Activated CD4-positive, alpha-beta T cell treated with anti-CD3 and anti-CD28 coated beads for 36 hours (primary cell): ENCODE measurements at regions of chr1 and their contacts with region 1.

Region 1: DNA sequence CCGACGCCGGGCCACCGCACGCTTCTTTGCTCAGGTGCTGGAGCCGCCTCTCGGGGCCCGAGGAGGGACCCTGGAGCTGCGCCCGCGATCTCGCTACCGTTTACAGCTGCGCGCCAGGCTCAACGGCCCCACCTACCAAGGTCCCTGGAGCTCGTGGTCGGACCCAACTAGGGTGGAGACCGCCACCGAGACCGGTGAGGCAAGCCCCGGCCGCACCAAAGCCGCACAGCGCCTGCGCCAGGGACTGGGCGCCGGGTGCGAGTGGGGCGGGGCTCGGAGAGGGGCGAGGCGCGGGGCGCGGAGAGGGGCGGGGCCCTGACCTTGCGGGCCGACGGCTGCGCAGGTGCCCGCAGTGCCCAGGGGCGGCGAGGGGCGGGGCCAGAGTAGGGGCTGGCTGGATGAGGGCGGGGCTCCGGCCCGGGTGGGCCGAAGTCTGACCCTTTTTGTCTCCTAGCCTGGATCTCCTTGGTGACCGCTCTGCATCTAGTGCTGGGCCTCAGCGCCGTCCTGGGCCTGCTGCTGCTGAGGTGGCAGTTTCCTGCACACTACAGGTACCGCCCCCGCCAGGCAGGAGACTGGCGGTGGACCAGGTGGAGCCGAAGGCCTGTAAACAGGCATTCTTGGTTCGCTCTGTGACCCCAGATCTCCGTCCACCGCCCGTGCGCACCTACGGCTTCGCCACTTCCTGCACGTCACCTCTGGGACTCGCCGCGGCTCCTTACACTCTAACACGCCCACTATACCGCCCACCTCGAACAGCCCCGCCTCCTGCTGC is 9.8 kb upstream of the CDC20 start:
- DNase-seq: peak; percentile 89
- ATAC-seq: peak; percentile 89
- H3K4me3 Mint-ChIP-seq: peak overlapping the region; percentile 71
- H3K27ac Mint-ChIP-seq: peak overlapping the region; percentile 72
- H3K4me1 Mint-ChIP-seq: peaks cover 19% of the 10 kb centered on the region
- H3K27me3 Mint-ChIP-seq: no peaks in the 10 kb centered on the region

Region 2: DNA sequence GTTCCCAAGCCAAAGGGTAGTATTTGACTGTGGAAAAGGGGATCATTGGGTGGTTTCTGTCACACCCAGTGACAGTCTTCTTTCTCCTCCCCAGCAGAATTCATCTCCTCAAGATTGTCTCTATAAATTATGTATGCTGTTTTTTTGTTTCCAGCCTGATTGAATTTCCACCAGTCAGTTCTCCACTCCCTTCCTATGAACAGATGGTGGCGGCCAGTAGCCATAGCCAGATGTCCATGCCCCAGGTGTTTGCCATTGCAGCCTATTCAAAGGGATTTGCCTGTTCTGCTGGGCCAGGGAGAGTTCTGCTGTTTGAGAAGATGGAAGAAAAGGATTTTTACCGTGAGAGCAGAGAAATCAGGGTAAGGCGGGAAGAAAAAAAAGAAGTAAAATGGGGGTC is 164.0 kb before region 1 on chr1:
- CTCF ChIA-PET with region 1: no interaction called
- POLR2A ChIA-PET with region 1: no interaction called
- intact Hi-C with region 1: no loop called
- DNase-seq: no peak
- ATAC-seq: no peak
- H3K4me3 Mint-ChIP-seq: no peak overlapping the region
- H3K27ac Mint-ChIP-seq: no peak overlapping the region
- H3K4me1 Mint-ChIP-seq: no peaks in the 10 kb centered on the region
- H3K27me3 Mint-ChIP-seq: peaks cover 6% of the 10 kb centered on the region

Region 3: DNA sequence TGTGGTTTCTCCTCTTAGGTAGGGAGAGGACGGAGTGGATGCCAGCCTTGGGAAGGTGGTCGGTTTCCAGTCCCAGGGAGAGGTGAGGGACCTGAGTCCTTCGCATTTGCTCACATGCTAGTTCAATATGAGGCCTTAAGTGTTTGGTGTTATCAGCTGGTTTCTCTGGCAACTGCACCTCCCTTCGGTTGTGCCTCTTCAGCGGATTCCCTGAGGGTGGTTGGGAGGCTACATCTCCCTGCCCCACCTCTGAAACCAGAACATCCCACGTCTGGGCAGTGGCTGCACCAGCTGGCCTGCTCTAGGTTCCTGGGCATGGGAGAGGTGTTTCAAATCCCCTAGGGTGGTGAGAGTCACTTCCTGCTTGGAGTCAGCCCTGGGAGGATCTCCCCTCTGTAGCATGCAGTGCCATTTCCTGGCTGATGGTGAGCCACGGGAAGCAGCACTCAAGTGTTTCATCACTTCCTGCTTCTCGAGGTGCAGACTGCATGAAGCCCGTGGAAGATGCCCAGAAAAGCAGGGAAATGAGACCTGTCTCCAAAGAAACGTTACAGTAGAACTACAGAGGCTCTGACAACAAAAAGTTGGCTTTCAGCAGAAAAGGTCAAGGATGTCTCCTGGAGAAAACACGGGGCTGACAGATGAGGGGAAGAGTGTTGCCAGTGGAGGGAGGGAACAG is 74.7 kb before region 1 on chr1:
- CTCF ChIA-PET with region 1: no interaction called
- POLR2A ChIA-PET with region 1: no interaction called
- intact Hi-C with region 1: loop called in 1 of 2 experiments (anchors 1 kb)
- DNase-seq: peak; percentile 69
- ATAC-seq: peak; percentile 91
- H3K4me3 Mint-ChIP-seq: peak overlapping the region; percentile 15
- H3K27ac Mint-ChIP-seq: peak overlapping the region; percentile 94
- H3K4me1 Mint-ChIP-seq: peaks cover 21% of the 10 kb centered on the region
- H3K27me3 Mint-ChIP-seq: peaks cover 4% of the 10 kb centered on the region

Region 4: DNA sequence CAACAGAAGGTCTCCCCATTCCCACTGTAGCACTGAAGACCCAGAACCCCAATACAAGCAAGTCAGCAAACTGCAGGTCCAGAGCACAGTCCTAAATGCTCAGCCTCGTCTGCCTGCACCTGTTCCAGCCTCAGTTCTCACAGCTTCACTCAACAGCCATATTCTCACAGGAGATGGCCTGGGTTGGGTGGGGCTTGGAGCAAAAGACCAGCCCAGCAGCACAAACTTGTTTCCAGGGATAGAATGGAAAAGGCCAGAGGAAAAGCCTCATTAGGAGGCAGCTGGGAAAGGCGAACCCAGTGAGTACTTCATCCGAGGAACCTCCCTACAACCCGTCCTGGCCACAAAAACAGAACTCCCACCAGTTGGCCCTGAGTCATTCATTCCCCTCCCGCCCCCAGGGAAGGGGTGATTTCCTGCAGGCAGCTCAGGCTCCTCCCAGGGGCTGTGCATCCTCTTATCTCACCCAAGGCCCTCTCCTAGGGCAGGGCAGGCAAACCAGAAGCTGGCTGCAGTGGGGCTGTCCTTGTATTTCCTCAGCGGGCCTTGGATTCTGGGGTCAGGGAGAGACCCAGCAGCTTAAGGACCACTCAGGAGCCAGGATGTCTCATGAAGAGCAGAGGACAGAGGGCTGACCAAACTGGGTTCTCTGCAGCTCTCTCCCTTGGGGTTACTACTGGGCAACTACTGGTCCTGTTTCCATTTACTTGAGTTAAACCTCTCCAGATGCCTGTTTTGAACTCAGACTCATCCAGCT is 18.8 kb before region 1 on chr1:
- CTCF ChIA-PET with region 1: no interaction called
- POLR2A ChIA-PET with region 1: no interaction called
- intact Hi-C with region 1: loop called in 1 of 2 experiments (anchors 1 kb)
- DNase-seq: peak; percentile 88
- ATAC-seq: peak; percentile 98
- H3K4me3 Mint-ChIP-seq: no peak overlapping the region
- H3K27ac Mint-ChIP-seq: peak overlapping the region; percentile 63
- H3K4me1 Mint-ChIP-seq: peaks cover 29% of the 10 kb centered on the region
- H3K27me3 Mint-ChIP-seq: no peaks in the 10 kb centered on the region

Region 5: GRCh38 chr1:43389326-43390313 is 40.6 kb after region 1 on chr1 and contains the starts of genes MED8 and SZT2:
- CTCF ChIA-PET with region 1: interaction called, 3 read pairs
- POLR2A ChIA-PET with region 1: no interaction called
- intact Hi-C with region 1: loop called in 1 of 2 experiments (anchors 2 kb)
- DNase-seq: peak; percentile 94
- ATAC-seq: peak; percentile 93
- H3K4me3 Mint-ChIP-seq: peak within 1 kb of the TSS; percentile 99
- H3K27ac Mint-ChIP-seq: peak within 1 kb of the TSS; percentile 97
- H3K4me1 Mint-ChIP-seq: peaks cover 39% of the 10 kb centered on the region
- H3K27me3 Mint-ChIP-seq: no peaks in the 10 kb centered on the region
- total RNA-seq, gene MED8: 32.3 to 36.6 TPM
- total RNA-seq, gene SZT2: 33.6 to 36.3 TPM